Heart left ventricle (tissue), 16 donors: ENCODE measurements at regions of chr9 and their contacts with region 1.

Region 1: DNA sequence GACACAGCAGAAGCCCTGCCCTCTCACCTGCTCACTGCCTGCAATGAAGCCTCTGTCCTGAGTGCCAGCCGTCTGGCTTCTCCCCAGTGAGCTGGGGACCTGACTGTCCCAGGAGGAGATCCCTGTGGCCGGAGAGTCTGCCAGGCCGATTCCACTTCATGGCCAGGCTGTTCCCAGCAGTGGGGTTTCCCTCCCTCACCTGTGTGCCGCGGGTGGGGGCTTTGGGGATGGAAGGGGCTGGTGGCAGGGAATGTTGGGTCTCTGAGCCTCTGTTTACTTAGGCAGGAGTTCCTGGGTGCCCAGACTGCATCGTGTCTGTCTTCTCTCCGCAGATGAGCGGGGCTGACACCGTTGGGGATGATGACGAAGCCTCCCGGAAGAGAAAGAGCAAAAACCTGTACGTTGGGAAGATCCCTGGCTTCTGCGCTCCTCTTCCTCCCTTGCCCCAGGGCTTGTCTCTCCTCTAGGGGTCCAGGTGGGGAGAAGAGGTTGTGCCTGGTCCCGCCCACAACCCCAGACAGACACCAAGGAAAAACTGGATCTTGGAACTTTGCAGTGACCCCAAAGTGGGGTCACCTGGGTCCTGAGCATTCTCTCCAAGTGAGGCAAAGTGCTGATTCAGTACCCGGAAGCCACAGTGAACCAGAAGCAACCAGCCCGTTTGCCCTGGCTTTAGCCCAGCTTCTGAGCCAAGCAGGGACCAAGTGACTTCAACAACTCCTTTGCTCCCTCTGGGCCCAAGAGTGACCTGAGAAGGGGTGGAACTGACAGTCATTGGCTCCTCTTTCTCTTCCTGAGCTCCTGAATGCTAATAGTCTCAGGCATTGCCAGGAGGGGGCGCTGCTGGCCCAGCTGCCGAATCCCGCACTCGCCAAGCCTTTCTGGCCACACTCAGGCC is 127.7 kb downstream of the RGS3 start:
- DNase-seq: peak; percentile 82 to 90 (median 85)
- ATAC-seq: peak in 3 of 4 donors; percentile 5 to 18 (median 12)
- H3K4me3 ChIP-seq: no peak overlapping the region
- H3K27ac ChIP-seq: peak overlapping the region; percentile 13 to 97 (median 76)
- H3K4me1 ChIP-seq: peaks cover 7 to 89% (median 76%) of the 10 kb centered on the region in 12 donors
- H3K27me3 ChIP-seq: no peaks in the 10 kb centered on the region
- CTCF ChIP-seq: peak; percentile 86 to 98 (median 94)
- POLR2A ChIP-seq: no peak

Region 2: DNA sequence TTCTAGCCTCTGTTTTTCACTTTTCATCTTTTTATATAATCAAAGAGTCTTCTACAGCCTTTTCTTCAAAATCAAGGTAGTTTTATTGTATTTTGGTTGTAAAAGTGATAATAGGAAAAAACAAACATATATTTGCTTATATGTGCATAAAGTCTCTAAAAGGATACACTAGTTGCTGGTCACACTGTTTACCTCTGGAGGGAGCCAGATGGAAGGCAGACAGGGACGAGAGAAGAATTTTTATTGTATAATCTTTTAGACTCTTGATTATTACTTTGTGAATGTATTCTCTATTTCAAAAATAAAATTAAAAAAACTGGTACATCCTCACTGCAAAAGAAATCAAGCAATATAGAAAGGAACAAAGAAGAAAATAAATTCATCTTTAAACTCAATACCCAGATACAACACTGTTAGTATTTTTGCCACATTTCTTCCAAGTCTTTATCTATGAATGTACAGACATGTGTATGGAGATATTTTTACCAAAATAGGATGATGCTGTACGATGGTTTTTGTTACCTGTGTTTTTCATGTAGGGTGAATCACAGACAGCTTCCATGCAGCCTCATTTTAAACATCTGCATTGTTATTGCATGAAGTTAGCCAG is 281.9 kb before region 1 on chr9:
- intact Hi-C with region 1: loop called in 1 of 10 experiments (anchors 10 kb)
- DNase-seq: no peak
- ATAC-seq: peak in 2 of 4 donors; percentile 63 to 64
- H3K4me3 ChIP-seq: no peak overlapping the region
- H3K27ac ChIP-seq: peak overlapping the region in 3 of 12 donors; percentile 16 to 73 (median 71)
- H3K4me1 ChIP-seq: peaks cover 0 to 22% (median 9%) of the 10 kb centered on the region in 12 donors
- H3K27me3 ChIP-seq: no peaks in the 10 kb centered on the region
- CTCF ChIP-seq: peak; percentile 56 to 83 (median 65)
- POLR2A ChIP-seq: no peak

Region 3: GRCh38 chr9:113446323-113446740 is 144.9 kb before region 1 on chr9:
- intact Hi-C with region 1: loop called (anchors 2 kb)
- DNase-seq: no peak
- ATAC-seq: peak in 3 of 4 donors; percentile 42 to 70 (median 59)
- H3K4me3 ChIP-seq: no peak overlapping the region
- H3K27ac ChIP-seq: peak overlapping the region in 9 of 12 donors; percentile 6 to 67 (median 35)
- H3K4me1 ChIP-seq: peaks cover 0 to 19% (median 5%) of the 10 kb centered on the region in 12 donors
- H3K27me3 ChIP-seq: no peaks in the 10 kb centered on the region
- CTCF ChIP-seq: peak; percentile 53 to 82 (median 70)
- POLR2A ChIP-seq: no peak

Region 4: DNA sequence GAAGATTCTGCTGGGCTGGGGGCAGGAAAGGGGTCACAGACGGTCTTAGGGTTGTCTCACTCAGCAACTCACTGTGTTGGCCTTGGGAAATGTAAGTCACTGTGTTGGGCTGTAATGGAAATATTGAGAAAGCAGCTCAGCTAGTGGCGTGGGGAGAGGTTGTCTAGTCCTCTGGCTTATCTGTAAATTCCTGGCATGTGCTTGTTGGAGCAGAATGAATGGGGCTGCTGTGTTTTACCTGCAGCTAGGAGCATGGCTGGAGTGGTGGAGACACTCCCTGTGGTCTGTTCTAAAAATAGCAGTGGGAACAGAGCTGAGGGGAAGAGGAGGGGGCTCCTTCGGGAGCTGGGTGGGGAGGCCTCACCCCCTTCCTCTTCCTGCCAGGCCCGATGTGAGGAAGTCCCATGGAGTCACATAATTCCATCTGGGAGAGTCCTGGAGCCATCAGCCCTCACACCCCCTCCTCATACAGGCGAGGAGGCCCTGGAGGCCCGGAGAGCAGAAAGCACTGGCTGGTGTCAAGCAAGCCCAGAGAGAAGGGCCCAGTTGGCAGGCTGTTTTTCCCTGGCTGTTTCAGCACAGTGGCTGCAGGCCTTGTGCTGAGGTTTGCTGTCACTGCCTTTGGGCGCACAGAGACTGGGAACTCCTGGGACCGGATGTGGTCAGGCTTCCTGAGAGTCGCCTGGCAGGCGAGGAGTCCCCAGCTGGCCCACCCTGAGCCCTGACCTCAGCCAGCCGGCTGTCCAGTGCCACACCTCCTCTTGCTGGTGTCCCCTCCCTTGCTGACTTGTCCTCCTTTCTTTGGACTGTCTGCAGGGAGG is 42.8 kb before region 1 on chr9:
- intact Hi-C with region 1: loop called in 3 of 10 experiments (anchors 5 kb)
- DNase-seq: peak; percentile 77 to 88 (median 88)
- ATAC-seq: peak; percentile 94
- H3K4me3 ChIP-seq: peak overlapping the region in 2 of 12 donors; percentile 0 to 6
- H3K27ac ChIP-seq: peak overlapping the region; percentile 54 to 91 (median 86)
- H3K4me1 ChIP-seq: peaks cover 16 to 71% (median 50%) of the 10 kb centered on the region in 12 donors
- H3K27me3 ChIP-seq: no peaks in the 10 kb centered on the region
- CTCF ChIP-seq: no peak
- POLR2A ChIP-seq: no peak

Region 5: DNA sequence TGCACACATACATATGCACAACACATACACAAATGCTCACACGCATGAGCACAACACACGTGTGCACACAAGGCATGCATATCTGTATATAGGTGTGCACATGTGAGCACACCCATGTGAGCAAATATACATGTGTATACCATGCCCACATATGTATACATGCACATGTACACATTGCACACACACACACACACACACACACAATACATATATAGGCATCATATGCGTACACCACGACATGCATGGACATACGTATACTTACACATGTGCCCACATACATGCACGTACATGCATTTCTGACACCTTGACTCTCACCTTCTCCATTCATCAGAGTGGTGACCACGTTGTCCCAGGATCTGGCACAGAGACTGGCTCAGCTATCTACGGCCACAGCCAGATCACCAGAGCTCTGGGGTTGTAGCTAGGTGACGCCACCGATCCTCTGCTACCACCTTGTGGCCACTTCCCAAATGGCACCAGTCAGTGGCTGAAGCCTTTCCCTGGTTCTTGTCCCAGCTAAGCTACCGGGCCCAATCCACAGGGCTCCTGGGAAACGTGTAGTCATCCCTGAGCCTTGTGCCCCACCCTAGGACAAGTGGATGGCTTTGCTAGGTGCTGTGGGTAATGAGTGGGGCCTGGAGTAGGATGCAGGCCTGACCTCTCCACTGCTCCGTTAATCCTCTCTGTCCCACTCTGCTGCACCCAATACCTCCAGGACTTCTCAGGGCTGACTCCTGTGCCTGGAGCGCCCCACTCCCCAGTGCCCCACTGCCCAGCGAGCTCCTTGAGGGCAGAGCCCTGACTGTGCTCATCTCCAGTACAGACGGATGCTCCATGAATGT is 66.7 kb after region 1 on chr9:
- intact Hi-C with region 1: loop called (anchors 1 kb)
- DNase-seq: peak; percentile 87 to 90 (median 88)
- ATAC-seq: peak; percentile 54 to 83 (median 74)
- H3K4me3 ChIP-seq: no peak overlapping the region
- H3K27ac ChIP-seq: peak overlapping the region in 5 of 12 donors; percentile 9 to 56 (median 28)
- H3K4me1 ChIP-seq: peaks cover 8 to 44% (median 30%) of the 10 kb centered on the region in 12 donors
- H3K27me3 ChIP-seq: no peaks in the 10 kb centered on the region
- CTCF ChIP-seq: peak; percentile 93 to 98 (median 97)
- POLR2A ChIP-seq: no peak

Region 6: GRCh38 chr9:113817171-113817570 is 225.9 kb after region 1 on chr9:
- intact Hi-C with region 1: no loop called
- DNase-seq: no peak
- ATAC-seq: no peak
- H3K4me3 ChIP-seq: no peak overlapping the region
- H3K27ac ChIP-seq: no peak overlapping the region
- H3K4me1 ChIP-seq: no peaks in the 10 kb centered on the region
- H3K27me3 ChIP-seq: peaks cover 0 to 8% (median 3%) of the 10 kb centered on the region in 9 donors
- CTCF ChIP-seq: no peak
- POLR2A ChIP-seq: no peak